ENCODE measurements at regions of chr16 and their contacts with region 1.

Region 1: DNA sequence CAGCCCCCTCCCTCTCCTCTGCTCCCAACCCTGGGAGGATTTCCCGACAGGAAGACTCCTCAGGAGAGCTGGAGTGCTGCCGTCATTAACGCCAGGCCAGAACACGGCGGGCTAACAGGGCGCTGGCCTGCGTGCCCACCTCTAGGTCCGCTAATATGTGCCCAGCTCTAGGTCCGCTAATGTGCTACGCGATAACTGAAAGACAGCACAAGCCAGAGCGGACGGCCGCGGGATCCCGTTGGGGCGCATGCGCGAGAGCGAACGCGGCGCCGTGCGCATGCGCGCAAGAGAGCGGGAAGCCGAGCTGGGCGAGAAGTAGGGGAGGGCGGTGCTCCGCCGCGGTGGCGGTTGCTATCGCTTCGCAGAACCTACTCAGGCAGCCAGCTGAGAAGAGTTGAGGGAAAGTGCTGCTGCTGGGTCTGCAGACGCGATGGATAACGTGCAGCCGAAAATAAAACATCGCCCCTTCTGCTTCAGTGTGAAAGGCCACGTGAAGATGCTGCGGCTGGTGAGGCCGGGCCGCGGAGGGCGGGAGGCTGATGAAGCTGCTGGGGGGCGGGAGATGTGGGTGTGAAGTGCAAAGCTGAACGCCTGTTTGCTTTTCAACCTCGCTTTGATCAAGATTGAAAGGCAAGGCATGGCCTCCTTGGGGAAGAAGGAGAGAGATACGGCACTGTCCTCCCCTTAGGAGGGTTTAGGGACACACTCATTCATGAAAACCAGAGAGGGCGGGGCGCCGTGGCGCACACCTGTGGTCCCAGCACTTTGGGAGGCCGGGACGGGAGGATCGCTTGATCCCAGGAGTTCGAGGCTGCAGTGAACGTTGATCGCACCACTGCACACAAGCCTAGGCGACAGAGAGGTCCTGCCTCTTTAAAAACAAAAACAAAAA is at the start of gene CKLF:
- DNase-seq: peak; percentile 85
- ATAC-seq: peak; percentile 80
- H3K4me3 ChIP-seq: peak within 1 kb of the TSS; percentile 70 to 79 (median 73)
- H3K27ac ChIP-seq: peak within 1 kb of the TSS; percentile 87
- H3K4me1 ChIP-seq: peaks cover 84% of the 10 kb centered on the region
- H3K27me3 ChIP-seq: no peaks in the 10 kb centered on the region
- CTCF ChIP-seq: no peak; the same call in 1 of the 2 replicates
- EP300 ChIP-seq: 0 out of 4 replicates have a peak, but pooled peaks of 1 of the 2 experiments have one; percentile 13
- POLR2A ChIP-seq: peak; percentile 87 to 97
- RAD21 ChIP-seq: 0 out of 2 replicates have a peak, but pooled peaks have one; percentile 33
- total RNA-seq, gene CKLF: 83.0 and 120 TPM in 2 replicates

Region 2: GRCh38 chr16:66459878-66460277 is 92.7 kb before region 1 on chr16:
- CTCF ChIA-PET with region 1: no interaction called
- POLR2A ChIA-PET with region 1: no interaction called
- in situ Hi-C with region 1: no loop called
- intact Hi-C with region 1: no loop called
- DNase-seq: no peak
- ATAC-seq: peak; percentile 38
- H3K4me3 ChIP-seq: no peak overlapping the region
- H3K27ac ChIP-seq: no peak overlapping the region
- H3K4me1 ChIP-seq: peaks cover 11% of the 10 kb centered on the region
- H3K27me3 ChIP-seq: peaks cover 0 to 12% of the 10 kb centered on the region in 2 experiments; a peak in 3 of 5 replicates
- CTCF ChIP-seq: no peak
- EP300 ChIP-seq: no peak
- POLR2A ChIP-seq: no peak
- RAD21 ChIP-seq: no peak

Region 3: GRCh38 chr16:66511615-66512500 is 40.7 kb before region 1 on chr16:
- CTCF ChIA-PET with region 1: no interaction called
- POLR2A ChIA-PET with region 1: interaction called, 21 read pairs
- in situ Hi-C with region 1: no loop called
- intact Hi-C with region 1: loop called (anchors 1 kb)
- DNase-seq: no peak
- ATAC-seq: no peak
- H3K4me3 ChIP-seq: no peak overlapping the region
- H3K27ac ChIP-seq: peak overlapping the region; percentile 46
- H3K4me1 ChIP-seq: peaks cover 49% of the 10 kb centered on the region
- H3K27me3 ChIP-seq: no peaks in the 10 kb centered on the region
- CTCF ChIP-seq: peak; percentile 38; the same call in 1 of the 2 replicates
- EP300 ChIP-seq: no peak
- POLR2A ChIP-seq: no peak
- RAD21 ChIP-seq: no peak

Region 4: DNA sequence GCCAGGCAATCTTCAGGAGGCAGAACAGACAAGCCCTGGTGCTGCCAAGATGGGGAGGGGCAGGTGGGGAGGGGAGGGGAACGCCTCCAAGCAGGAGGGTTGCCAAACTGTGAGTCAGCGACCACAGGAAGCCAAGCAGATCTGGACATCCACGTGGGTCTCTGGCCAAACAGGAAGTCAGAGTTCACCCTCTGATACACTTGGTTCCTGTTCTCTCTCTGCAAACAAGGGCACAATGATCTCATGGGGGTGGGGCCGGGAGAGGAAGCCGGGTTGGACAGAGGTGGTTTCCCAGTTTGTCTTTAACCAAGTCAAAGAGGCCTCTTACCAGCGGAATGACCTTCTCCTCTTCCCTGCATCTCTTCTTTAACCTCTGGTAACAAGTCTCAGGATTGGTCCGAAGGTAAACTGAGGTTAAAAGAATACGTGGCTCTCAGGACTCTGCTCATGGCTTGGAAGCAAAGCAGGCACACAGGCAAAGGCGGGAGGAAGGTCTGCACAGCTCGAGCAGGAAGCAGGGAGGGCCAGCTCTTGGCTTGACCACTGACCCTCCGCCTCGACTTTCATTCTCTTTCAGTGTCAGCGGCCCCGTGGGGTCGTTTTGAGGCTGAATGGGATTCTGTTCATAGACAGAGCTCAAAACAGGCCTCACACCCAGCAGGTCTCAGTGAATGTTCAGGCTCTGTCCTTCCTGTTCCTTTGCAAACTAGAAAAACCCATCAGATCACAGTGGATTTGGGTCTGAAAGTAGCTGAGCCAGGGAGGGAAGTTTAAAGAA is 35.5 kb before region 1 on chr16:
- CTCF ChIA-PET with region 1: no interaction called
- POLR2A ChIA-PET with region 1: interaction called, 21 read pairs
- in situ Hi-C with region 1: no loop called
- intact Hi-C with region 1: loop called (anchors 1 kb)
- DNase-seq: peak; percentile 100
- ATAC-seq: peak; percentile 93
- H3K4me3 ChIP-seq: peak overlapping the region; percentile 35 to 67 (median 43)
- H3K27ac ChIP-seq: peak overlapping the region; percentile 99
- H3K4me1 ChIP-seq: peaks cover 61% of the 10 kb centered on the region
- H3K27me3 ChIP-seq: no peaks in the 10 kb centered on the region
- CTCF ChIP-seq: 0 out of 2 replicates have a peak, but pooled peaks have one; percentile 4
- EP300 ChIP-seq: peak; percentile 65 to 94; a peak in 3 of 4 replicates
- POLR2A ChIP-seq: peak; percentile 81 to 94
- RAD21 ChIP-seq: no peak; the same call in none of the 2 replicates